Activated CD4-positive, alpha-beta T cell treated with anti-CD3 and anti-CD28 coated beads, Interleukin-2, amount 10 ng/mL, durations not matched to agents 24 days and 14 days (primary cell): ENCODE measurements at regions of chr6 and their contacts with region 1.

Region 1: DNA sequence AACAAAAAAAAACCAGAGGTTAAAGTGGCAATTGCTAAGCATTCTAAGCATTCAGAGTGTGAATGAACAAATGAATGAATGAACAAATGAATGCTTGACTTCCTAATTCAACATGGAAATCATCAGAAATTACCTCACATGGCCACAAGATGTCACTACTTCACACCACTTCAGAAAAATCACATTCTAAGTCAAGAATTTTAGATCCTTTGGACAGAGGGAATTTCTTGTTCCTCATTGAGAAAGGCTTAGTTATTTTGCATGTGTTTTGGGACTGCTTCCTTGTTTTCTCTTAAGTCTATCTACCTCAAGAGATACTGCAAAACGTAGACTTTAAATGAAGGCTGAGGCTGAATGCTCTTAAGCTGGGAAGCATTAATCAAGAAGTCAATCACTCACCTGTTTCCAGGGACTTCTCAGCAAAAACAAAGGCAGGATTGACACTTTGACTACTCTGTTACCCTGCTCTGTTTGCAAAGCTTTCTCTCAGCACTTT is 120.2 kb downstream of the MBOAT1 start:
- DNase-seq: peak; percentile 68
- H3K4me3 Mint-ChIP-seq: no peak overlapping the region
- H3K27ac Mint-ChIP-seq: no peak overlapping the region
- H3K4me1 Mint-ChIP-seq: no peaks in the 10 kb centered on the region
- H3K27me3 Mint-ChIP-seq: no peaks in the 10 kb centered on the region

Region 2: GRCh38 chr6:19976411-19977129 is 115.5 kb before region 1 on chr6:
- intact Hi-C with region 1: no loop called
- DNase-seq: no peak
- H3K4me3 Mint-ChIP-seq: no peak overlapping the region
- H3K27ac Mint-ChIP-seq: no peak overlapping the region
- H3K4me1 Mint-ChIP-seq: no peaks in the 10 kb centered on the region
- H3K27me3 Mint-ChIP-seq: no peaks in the 10 kb centered on the region

Region 3: DNA sequence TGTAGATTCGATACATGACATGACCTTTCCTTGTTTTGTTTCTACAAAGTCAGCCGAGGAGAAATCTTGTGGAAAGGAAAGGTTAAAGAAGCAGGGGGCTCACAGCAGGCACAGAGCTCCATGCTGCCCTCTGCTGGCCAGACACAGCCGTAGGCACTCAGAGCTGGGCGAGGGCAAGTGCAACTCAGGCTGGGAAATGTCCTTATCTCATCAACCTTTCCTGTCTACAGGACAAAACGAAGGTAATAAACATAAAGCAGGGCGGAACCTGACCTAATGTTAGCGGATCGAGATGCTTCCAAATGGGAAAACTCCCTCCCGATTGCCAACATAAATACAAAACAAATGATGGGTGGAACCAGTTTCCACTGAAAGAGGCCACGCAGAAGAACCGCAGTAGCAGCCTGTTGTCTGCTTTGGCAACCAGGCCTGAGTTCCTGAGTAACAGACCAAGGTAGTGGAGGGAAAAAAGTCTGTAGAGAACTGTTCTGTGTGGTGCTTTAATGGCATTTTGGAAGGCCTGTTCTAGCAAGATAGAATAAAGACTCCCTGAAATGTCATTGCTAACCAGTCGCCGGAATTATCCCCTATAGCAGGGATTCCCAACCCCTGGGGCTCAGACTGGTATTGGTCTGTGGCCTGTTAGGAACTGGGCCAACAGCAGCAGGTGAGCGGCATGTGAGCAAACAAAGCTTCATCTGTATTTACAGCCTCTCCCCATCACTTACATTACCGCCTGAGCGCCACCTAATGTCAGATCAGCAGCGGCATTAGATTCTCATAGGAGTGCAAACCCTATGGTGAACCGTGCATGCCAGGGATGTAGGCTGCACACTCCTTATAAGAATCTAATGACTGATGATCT is 34.9 kb after region 1 on chr6:
- intact Hi-C with region 1: loop called (anchors 1 kb)
- DNase-seq: peak; percentile 88
- H3K4me3 Mint-ChIP-seq: no peak overlapping the region
- H3K27ac Mint-ChIP-seq: peak overlapping the region; percentile 28
- H3K4me1 Mint-ChIP-seq: peaks cover 3% of the 10 kb centered on the region
- H3K27me3 Mint-ChIP-seq: no peaks in the 10 kb centered on the region

Region 4: DNA sequence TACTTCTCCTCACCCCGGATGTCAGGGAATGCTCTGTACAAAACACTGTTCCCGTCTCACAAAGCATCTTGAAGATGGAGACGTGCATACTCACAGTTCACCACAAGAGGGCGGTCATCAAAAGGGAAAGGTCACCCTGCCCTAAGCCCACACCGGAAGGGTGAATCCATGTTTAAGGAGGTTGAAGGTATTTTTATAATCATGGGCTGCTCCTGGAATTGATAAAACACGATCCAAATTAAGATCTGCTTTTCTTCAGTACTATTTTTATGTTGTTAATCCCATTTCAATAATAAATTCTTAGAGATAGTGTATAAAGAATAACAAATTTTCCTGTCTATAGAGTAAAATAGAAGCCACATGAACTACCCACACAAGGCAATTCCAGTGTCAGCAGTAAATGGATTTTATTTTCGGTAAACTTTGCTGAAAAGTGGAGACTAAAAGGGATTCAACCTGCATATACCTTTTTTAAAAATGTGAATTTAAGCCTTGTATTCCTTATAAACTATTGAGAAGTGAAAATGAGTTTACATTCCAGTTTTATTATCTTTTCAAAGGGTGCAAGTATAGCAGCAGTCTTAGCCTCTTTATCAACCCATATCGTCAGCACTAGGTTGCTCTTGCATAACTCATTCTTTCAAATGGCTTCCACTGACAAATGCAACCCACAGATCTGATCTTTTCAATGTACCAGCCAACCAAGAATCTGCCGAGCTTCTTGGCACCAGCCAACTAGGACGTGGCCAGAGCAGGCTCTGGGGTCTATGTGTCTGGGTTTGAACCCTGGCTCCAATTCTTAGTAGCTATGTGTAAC is 199.9 kb after region 1 on chr6:
- intact Hi-C with region 1: loop called (anchors 1 kb)
- DNase-seq: peak; percentile 93
- H3K4me3 Mint-ChIP-seq: peak overlapping the region; percentile 9
- H3K27ac Mint-ChIP-seq: peak overlapping the region; percentile 2
- H3K4me1 Mint-ChIP-seq: peaks cover 35% of the 10 kb centered on the region
- H3K27me3 Mint-ChIP-seq: peaks cover 7% of the 10 kb centered on the region

Region 5: DNA sequence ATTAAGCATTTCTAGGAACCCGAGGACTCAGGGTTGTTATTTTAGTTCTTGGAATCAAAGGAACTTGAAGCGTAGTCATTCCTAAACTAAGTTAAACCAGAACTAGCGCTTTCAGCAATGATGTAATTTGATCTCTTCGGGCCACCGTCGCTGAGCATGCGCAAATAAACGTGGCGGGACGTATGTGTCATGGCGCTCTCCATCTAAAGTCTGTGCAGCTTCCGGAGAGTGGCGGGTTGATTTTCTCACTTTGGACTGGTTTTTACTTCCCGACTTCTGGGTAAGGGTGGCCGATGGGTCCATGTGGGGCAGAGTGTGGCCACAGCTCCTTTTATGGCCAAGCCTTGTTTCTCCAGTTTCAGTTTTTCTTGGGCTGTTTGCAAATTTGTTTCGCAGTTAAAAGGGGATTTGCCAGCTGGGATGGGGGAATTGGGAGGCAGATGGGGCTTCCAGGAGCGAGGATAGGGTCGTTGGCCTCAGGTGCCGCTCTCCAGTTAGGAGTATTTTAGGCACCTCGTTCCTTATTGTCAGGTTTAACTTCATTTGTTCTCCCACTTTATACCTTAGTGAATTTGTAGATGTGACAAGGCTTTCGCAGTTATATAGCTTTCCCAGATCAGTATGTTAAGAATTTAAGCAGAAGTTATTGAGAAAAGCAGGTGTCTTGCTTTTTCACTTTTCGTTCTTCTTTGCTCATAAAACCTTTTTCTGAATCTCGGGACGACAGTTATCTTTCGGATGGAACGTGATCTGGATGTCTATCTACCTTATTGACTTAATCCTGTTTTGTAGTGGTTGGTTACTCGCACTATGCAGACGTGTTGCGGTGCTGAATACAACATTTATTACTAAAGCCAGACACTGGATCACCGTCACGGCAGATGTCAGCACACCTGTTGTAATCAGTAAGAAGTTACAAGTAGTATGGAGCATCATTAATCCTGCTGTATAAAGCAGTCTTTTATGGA is 442.5 kb after region 1 on chr6 and contains the start of gene CDKAL1:
- intact Hi-C with region 1: loop called (anchors 2 kb)
- DNase-seq: peak; percentile 97
- H3K4me3 Mint-ChIP-seq: peak within 1 kb of the TSS; percentile 96
- H3K27ac Mint-ChIP-seq: peak within 1 kb of the TSS; percentile 95
- H3K4me1 Mint-ChIP-seq: peaks cover 37% of the 10 kb centered on the region
- H3K27me3 Mint-ChIP-seq: peaks cover 2% of the 10 kb centered on the region
- total RNA-seq, gene CDKAL1: 28.5 and 29.1 TPM in 2 replicates